Activated CD8-positive, alpha-beta memory T cell treated with anti-CD3 and anti-CD28 coated beads, Interleukin-2, amount 10 ng/mL, durations not matched to agents 7 days and 5 days (primary cell): ENCODE measurements at regions of chr17 and their contacts with region 1.

Region 1: GRCh38 chr17:18319604-18320256 is 4.6 kb downstream of the SMCR8 start:
- DNase-seq: no peak
- ATAC-seq: no peak
- H3K4me3 Mint-ChIP-seq: no peak overlapping the region
- H3K27ac Mint-ChIP-seq: peak overlapping the region; percentile 50
- H3K4me1 Mint-ChIP-seq: peaks cover 58% of the 10 kb centered on the region
- H3K27me3 Mint-ChIP-seq: no peaks in the 10 kb centered on the region

Region 2: DNA sequence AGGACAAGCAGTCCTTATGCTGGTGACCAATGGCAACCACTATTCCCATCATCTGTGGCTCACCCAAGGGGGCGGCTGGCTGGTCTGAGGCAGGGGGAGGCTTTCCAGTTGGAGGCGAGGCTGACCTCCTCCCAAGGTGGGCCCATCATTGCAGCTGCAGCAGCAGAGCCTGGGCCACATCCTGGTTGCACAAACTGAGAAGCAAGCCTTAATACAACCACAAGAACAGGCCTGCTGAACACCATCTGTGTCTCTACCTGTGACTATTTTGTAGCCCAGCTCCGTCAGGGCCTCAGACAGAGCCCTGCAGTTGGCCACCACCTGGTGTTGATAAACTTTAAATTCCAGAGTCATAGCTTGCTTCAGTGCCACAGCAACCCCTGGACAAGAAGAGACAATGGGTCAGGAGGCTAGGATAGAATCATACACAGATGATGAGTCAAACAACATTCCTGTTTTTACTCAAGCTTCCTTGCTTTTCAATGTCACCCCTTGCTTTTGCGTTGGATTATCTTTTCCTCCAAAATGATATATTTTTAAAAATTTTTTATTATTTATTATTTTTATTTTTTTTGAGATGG is 13.3 kb after region 1 on chr17:
- CTCF ChIA-PET with region 1: interaction called, 14 read pairs
- DNase-seq: peak; percentile 73
- ATAC-seq: peak; percentile 73
- H3K4me3 Mint-ChIP-seq: no peak overlapping the region
- H3K27ac Mint-ChIP-seq: peak overlapping the region; percentile 87
- H3K4me1 Mint-ChIP-seq: peaks cover 30% of the 10 kb centered on the region
- H3K27me3 Mint-ChIP-seq: no peaks in the 10 kb centered on the region